WTC11 (cell line): ENCODE measurements at regions of chr9 and their contacts with region 1.

Region 1: DNA sequence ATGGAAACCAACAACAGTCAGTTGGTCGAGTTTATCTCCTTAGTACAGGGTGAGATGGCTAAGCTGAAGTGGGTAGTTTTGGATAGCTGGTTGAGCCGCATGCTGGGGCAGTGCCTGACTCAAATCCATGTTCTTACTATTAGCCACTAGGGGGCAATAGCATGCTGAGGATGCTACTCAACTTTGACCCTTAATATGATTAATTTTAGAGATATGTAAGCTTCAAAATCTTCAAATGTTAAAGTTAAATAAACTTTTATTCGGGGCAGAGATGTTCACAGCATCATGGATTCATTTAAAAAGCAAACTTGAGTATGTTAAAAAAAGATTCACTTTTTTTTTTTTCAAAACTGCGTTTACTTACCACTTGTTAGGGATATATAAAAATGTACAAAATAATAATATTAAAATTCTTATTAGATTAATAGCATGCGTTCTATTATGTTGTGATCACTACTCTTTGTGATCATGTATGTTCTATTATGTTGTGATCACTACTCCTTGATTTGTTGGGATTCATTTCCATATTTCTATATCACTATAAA is 57.0 kb downstream of the C9orf153 start:
- DNase-seq: peak; percentile 19
- ATAC-seq: peak; percentile 88
- H3K4me3 Mint-ChIP-seq: no peak overlapping the region
- H3K27ac Mint-ChIP-seq: no peak overlapping the region
- H3K4me1 Mint-ChIP-seq: 0 out of 2 replicates have a peak, but pooled peaks cover 3% of the 10 kb centered on the region
- H3K27me3 Mint-ChIP-seq: no peaks in the 10 kb centered on the region
- CTCF ChIP-seq: peak; percentile 69

Region 2: GRCh38 chr9:85617141-85617670 is 585.2 kb before region 1 on chr9:
- CTCF ChIA-PET with region 1: no interaction called
- POLR2A ChIA-PET with region 1: no interaction called
- DNase-seq: no peak
- ATAC-seq: no peak
- H3K4me3 Mint-ChIP-seq: no peak overlapping the region
- H3K27ac Mint-ChIP-seq: no peak overlapping the region
- H3K4me1 Mint-ChIP-seq: no peaks in the 10 kb centered on the region
- H3K27me3 Mint-ChIP-seq: no peaks in the 10 kb centered on the region
- CTCF ChIP-seq: no peak

Region 3: GRCh38 chr9:86176468-86176867 is 25.9 kb before region 1 on chr9:
- CTCF ChIA-PET with region 1: interaction called, 21 read pairs
- POLR2A ChIA-PET with region 1: no interaction called
- DNase-seq: no peak
- ATAC-seq: peak; percentile 29; the same call in 1 of the 2 replicates
- H3K4me3 Mint-ChIP-seq: no peak overlapping the region
- H3K27ac Mint-ChIP-seq: no peak overlapping the region
- H3K4me1 Mint-ChIP-seq: peaks cover 32% of the 10 kb centered on the region
- H3K27me3 Mint-ChIP-seq: no peaks in the 10 kb centered on the region
- CTCF ChIP-seq: no peak

Region 4: GRCh38 chr9:86187121-86187520 is 15.3 kb before region 1 on chr9:
- CTCF ChIA-PET with region 1: interaction called, 21 read pairs
- POLR2A ChIA-PET with region 1: no interaction called
- DNase-seq: peak; percentile 55
- ATAC-seq: peak; percentile 97
- H3K4me3 Mint-ChIP-seq: no peak overlapping the region
- H3K27ac Mint-ChIP-seq: peak overlapping the region; percentile 33
- H3K4me1 Mint-ChIP-seq: peaks cover 26% of the 10 kb centered on the region
- H3K27me3 Mint-ChIP-seq: peaks cover 4% of the 10 kb centered on the region
- CTCF ChIP-seq: no peak

Region 5: DNA sequence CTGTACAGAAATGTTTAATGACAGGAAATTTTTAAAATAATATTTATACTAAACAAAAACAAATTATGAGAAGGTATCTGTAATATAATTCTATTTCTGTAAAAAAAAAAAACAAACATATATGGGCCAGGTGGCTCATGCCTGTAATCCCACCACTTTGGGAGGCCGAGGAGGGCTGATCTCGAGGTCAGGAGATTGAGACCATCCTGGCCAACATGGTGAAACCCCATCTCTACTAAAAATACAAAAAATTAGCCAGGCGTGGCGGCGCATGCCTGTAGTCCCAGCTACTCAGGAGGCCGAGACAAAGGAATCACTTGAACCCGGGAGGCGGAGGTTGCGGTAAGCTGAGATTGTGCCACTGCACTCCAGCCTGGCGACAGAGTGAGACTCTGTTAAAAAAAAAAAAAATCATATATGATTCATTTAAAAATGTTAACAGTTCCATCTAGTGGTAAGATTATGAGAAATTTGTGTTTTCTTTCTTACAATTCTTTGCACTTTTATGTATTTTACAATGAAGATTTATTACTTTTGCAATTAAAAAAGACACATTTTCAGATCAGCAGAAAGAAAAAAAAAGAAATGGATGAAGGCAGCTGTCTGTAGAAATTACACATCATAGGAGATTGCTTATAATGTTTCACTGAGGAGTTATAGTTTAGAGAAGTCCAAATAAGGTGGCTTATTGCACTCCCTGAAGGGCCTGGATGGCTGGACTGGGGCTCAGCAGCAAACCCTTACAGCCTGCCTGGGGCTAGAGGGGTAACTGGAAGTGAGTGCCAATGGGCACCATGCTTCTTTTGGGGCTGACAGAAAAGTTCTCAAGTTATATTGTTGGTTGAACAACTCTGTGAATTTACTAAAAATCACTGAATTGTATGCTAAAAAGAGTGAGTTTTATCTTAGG is 36.7 kb after region 1 on chr9:
- CTCF ChIA-PET with region 1: interaction called, 11 read pairs
- POLR2A ChIA-PET with region 1: no interaction called
- DNase-seq: no peak
- ATAC-seq: no peak
- H3K4me3 Mint-ChIP-seq: no peak overlapping the region
- H3K27ac Mint-ChIP-seq: no peak overlapping the region
- H3K4me1 Mint-ChIP-seq: peaks cover 3% of the 10 kb centered on the region
- H3K27me3 Mint-ChIP-seq: no peaks in the 10 kb centered on the region; the same call in 1 of the 2 replicates
- CTCF ChIP-seq: no peak

Region 6: DNA sequence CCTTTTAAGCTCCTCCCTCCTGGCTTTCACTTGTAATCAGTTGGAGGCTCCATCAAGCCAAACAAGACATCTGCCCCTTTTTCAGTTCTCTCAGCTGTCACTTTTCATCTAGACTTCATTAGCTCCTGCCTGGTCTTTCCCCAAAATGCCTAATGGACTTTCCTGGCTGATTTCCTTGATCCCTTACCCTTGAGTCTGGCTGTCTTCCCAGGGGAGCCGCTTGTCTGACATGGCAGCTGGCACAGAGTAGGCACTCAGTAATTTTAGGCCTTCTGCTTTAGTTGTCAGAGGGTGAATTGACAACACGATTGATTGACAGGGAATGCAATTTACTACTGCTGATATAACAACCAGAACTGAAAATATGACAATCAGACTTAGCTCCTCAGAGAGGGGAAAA is 55.0 kb after region 1 on chr9:
- CTCF ChIA-PET with region 1: interaction called, 24 read pairs
- POLR2A ChIA-PET with region 1: no interaction called
- DNase-seq: no peak
- ATAC-seq: no peak
- H3K4me3 Mint-ChIP-seq: no peak overlapping the region
- H3K27ac Mint-ChIP-seq: no peak overlapping the region
- H3K4me1 Mint-ChIP-seq: no peaks in the 10 kb centered on the region; the same call in 1 of the 2 replicates
- H3K27me3 Mint-ChIP-seq: no peaks in the 10 kb centered on the region
- CTCF ChIP-seq: no peak

Region 7: DNA sequence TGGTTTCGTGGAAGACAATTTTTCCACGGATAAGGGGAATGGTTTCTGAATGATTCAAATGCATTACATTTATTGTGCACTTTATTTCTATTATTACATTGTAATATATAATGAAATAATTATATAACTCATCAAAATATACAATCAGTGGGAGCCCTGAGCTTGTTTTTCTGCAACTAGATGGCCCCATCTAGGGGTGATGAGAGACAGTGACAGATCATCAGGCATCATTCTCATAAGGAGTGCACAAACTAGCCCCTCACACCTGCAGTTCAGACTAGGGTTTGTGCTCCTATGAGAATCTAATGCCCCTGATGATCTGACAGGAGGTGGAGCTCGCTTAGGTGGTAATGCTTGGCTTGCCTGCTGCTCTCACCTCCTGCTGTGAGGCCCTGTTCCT is 73.6 kb after region 1 on chr9:
- CTCF ChIA-PET with region 1: interaction called, 22 read pairs
- POLR2A ChIA-PET with region 1: no interaction called
- DNase-seq: no peak
- ATAC-seq: peak; percentile 46
- H3K4me3 Mint-ChIP-seq: no peak overlapping the region
- H3K27ac Mint-ChIP-seq: no peak overlapping the region
- H3K4me1 Mint-ChIP-seq: peaks cover 25% of the 10 kb centered on the region
- H3K27me3 Mint-ChIP-seq: no peaks in the 10 kb centered on the region
- CTCF ChIP-seq: peak; percentile 35; the same call in 1 of the 2 replicates